ENCODE measurements at regions of chr2 and their contacts with region 1.

Region 1: DNA sequence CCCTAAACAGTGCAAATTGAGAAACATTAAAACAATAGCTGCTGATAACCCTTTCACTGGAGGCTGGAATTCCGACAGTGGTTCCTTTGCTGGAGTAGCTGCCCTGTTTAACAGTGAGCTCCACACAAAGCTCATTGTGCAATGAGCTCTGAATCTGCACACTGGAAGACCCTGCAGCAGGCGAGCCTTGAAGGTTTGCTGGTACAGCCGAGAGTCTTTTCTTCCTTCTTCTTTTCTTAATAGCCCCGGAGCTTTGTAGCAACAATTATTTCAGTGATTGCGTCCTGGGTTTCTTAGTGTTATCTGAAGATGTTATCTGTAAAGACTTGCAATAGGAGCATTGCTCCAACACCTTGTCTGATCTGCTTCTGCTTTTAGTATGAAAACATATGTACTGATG is 50.8 kb upstream of the CXCR4 start:
- DNase-seq: no peak
- H3K4me3 ChIP-seq: no peak overlapping the region
- H3K27ac ChIP-seq: no peak overlapping the region
- H3K4me1 ChIP-seq: no peaks in the 10 kb centered on the region
- H3K27me3 ChIP-seq: no peaks in the 10 kb centered on the region
- CTCF ChIP-seq: no peak

Region 2: GRCh38 chr2:135863233-135863632 is 305.5 kb before region 1 on chr2:
- CTCF ChIA-PET with region 1: no interaction called
- dilution Hi-C with region 1: no loop called
- in situ Hi-C with region 1: no loop called
- intact Hi-C with region 1: no loop called
- DNase-seq: no peak
- H3K4me3 ChIP-seq: no peak overlapping the region
- H3K27ac ChIP-seq: no peak overlapping the region
- H3K4me1 ChIP-seq: no peaks in the 10 kb centered on the region
- H3K27me3 ChIP-seq: no peaks in the 10 kb centered on the region
- CTCF ChIP-seq: no peak

Region 3: DNA sequence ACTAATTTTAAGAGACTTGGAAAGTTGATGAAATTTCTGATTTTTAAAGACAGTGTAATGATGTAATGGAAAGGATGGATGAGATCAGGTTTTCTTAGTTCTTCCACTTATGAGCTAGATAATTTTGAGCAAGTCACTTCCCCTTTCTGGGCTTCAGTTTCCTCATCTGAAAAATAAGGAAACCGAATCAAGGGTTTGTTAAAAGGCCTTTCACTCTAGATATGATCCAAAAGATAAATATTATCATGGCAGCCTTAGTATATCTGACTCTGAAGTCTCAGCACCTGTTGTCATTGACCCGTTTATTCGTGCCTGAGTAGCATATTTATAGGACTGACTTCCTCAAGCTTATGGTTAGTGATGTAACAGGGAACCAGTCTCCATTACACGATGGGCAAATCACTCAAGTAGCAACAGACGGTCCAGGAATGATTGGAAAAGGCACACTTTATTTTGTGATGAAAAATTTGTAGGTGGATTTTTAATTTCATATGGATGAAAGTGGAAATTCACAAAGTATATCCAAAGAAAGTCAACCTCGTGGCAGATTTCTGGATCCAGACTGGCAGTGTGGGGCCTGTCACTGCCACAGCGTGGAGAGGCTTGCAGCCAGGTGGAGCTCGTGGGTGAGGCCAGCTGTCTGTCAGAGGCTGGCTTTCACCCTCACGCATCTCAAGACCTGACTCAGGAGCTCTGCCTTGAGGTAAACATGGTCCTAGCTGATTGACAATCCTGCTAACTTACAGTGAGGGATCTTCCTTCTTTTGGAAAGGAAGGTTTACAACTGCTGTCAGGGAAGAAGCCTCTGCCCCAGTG is 87.1 kb after region 1 on chr2:
- CTCF ChIA-PET with region 1: no interaction called
- dilution Hi-C with region 1: loop called (anchors 5 kb)
- in situ Hi-C with region 1: no loop called
- intact Hi-C with region 1: no loop called
- DNase-seq: no peak
- H3K4me3 ChIP-seq: no peak overlapping the region
- H3K27ac ChIP-seq: no peak overlapping the region
- H3K4me1 ChIP-seq: no peaks in the 10 kb centered on the region
- H3K27me3 ChIP-seq: no peaks in the 10 kb centered on the region
- CTCF ChIP-seq: no peak

Region 4: DNA sequence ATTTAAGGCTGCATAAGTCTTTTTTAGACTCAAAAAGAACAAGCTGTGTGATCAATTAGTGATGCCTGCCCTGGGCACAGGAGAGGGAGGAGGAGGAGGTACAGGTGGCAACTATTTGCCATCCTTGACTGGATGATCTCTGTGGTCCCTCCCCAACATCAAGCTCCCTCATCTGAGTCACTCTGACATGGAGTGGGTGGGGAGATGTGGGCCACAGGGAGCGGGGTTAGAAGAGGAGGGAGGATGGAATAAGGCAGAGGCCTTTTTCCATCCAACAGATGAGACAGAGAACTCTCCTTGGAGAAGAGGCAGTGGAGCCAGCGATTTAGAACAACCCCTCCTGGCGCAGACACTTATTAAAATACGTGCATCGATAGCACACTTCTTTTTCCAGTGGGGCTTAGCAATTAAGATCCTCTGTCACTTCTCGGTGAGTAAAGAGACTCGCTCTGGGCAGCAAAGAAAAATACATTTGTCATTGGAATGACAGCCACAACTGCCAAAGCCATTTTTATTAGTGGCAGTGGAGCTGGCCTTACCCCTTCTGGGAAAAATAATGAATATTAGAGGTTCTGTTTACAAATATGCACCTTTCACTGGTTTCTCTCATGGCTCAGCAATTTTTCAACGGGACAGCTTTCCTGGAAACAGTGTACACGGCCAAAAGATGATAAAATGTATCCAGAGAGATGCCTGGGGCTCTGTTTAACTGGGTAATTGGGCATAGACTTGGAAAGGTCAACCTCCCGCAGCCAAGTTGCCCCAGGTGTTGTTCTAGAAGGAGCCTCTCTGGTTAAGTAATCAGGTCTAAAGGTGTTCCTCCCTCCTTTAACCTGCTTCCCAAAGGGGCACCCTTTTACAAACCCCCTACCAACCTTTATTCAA is 187.6 kb after region 1 on chr2:
- CTCF ChIA-PET with region 1: no interaction called
- dilution Hi-C with region 1: no loop called
- in situ Hi-C with region 1: no loop called
- intact Hi-C with region 1: no loop called
- DNase-seq: no peak
- H3K4me3 ChIP-seq: no peak overlapping the region
- H3K27ac ChIP-seq: no peak overlapping the region
- H3K4me1 ChIP-seq: no peaks in the 10 kb centered on the region
- H3K27me3 ChIP-seq: peaks cover 5% of the 10 kb centered on the region
- CTCF ChIP-seq: no peak